SK-N-SH (cell line): ENCODE measurements at regions of chr4 and their contacts with region 1.

Region 1: DNA sequence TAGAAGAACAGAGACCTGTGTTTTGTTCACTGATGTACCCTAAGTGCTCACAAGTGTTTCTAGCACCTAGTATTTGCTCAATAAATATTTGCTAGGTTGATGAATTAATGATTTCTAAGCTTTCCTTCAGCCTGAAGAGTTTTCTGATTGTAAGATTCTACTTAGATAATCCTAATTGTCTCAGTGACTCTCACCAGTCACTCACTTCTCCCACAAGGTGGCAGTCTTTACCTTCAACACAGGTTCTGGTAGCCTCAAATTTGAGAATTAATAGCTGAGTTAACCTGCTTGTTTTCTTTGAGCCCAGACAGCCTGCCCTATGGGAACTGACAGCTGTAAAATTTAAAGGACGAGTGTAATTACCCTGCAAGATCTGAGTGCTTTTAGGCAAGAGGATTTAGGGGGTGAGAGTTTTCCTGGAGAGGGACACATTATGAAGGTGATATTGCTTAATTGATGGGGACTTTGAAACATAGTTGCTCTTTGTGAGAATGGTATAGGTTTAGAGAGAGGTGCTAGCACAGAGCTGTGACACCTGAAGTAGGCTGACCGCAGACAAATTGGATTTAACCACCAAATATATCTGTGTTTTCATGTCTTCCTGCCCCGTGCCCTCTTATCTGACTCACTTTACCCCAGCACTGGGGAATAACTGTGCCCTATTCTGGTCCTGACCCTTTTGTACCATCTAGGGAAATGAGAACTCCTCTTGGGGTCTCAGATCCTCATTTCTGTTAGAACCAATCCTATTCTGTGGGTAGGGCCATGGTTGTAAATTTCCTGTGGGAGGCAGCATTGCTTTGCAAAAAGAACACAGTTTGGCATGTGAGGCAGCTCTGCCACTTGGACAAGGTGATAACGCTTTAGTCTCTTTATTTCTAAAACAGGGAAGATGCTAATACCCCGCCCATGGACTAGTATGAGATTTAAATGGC is 27.7 kb downstream of the CD38 start:
- DNase-seq: peak; percentile 39
- H3K4me3 ChIP-seq: no peak overlapping the region; a peak in 1 of 4 replicates
- H3K27ac ChIP-seq: no peak overlapping the region
- H3K4me1 ChIP-seq: no peaks in the 10 kb centered on the region
- H3K27me3 ChIP-seq: no peaks in the 10 kb centered on the region; the same call in 1 of the 2 replicates
- CTCF ChIP-seq: peak; percentile 88
- EP300 ChIP-seq: no peak
- RAD21 ChIP-seq: peak; percentile 92

Region 2: DNA sequence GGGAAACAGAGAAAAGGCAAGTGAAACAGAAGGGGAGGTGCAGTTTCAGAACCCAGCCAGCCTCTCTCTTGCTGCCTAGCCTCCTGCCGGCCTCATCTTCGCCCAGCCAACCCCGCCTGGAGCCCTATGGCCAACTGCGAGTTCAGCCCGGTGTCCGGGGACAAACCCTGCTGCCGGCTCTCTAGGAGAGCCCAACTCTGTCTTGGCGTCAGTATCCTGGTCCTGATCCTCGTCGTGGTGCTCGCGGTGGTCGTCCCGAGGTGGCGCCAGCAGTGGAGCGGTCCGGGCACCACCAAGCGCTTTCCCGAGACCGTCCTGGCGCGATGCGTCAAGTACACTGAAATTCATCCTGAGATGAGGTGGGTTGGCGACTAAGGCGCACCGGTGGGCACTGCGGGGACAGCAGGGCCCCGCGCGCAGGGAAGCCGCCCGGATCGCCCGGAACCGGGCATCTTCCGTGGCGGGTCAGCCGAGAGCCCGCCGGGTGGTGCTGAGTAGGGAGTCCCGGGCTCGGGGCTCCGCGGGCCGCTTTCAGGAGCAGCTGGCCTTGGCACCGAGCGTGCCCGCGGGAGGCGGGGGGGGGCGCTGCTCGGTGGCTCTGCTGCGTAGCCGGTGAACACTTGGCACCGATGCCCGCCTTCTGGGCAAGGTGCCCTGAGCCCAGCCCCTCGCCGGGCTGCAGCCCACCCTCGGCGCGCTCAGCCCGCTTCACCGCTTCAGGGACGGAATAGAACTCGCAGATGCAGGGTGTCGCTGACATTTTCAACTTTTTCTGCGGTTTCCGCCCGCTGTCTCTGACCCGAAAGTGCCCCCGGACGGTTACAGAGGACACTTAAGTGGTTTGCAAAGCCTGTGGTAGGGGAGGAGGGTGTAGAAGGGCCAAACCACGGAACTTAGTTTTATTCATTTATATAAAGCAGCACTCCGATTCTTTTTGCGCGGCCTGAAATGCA is 27.3 kb before region 1 on chr4 and contains the start of gene CD38:
- CTCF ChIA-PET with region 1: interaction called, 26 read pairs
- POLR2A ChIA-PET with region 1: no interaction called
- DNase-seq: peak; percentile 78
- H3K4me3 ChIP-seq: peak within 1 kb of the TSS; percentile 59 to 66
- H3K27ac ChIP-seq: no peak within 1 kb of the TSS
- H3K4me1 ChIP-seq: peaks cover 0 to 10% of the 10 kb centered on the region in 2 experiments; a peak in 2 of 4 replicates
- H3K27me3 ChIP-seq: peaks cover 21% of the 10 kb centered on the region
- CTCF ChIP-seq: no peak
- EP300 ChIP-seq: no peak
- RAD21 ChIP-seq: no peak
- polyA plus RNA-seq, gene CD38: 0.02 TPM in 1 of 2 replicates, not detected in the other

Region 3: GRCh38 chr4:15836362-15836761 is 30.5 kb after region 1 on chr4:
- CTCF ChIA-PET with region 1: interaction called, 10 read pairs
- POLR2A ChIA-PET with region 1: no interaction called
- DNase-seq: no peak
- H3K4me3 ChIP-seq: no peak overlapping the region
- H3K27ac ChIP-seq: no peak overlapping the region
- H3K4me1 ChIP-seq: no peaks in the 10 kb centered on the region
- H3K27me3 ChIP-seq: no peaks in the 10 kb centered on the region
- CTCF ChIP-seq: no peak
- EP300 ChIP-seq: no peak
- RAD21 ChIP-seq: no peak

Region 4: GRCh38 chr4:15945516-15945915 is 139.7 kb after region 1 on chr4:
- CTCF ChIA-PET with region 1: interaction called, 14 read pairs
- POLR2A ChIA-PET with region 1: no interaction called
- DNase-seq: no peak
- H3K4me3 ChIP-seq: no peak overlapping the region
- H3K27ac ChIP-seq: no peak overlapping the region
- H3K4me1 ChIP-seq: no peaks in the 10 kb centered on the region
- H3K27me3 ChIP-seq: no peaks in the 10 kb centered on the region
- CTCF ChIP-seq: no peak
- EP300 ChIP-seq: no peak
- RAD21 ChIP-seq: no peak

Region 5: GRCh38 chr4:16001484-16001858 is 195.6 kb after region 1 on chr4:
- CTCF ChIA-PET with region 1: interaction called, 69 read pairs
- POLR2A ChIA-PET with region 1: no interaction called
- DNase-seq: peak; percentile 76
- H3K4me3 ChIP-seq: no peak overlapping the region; a peak in 1 of 4 replicates
- H3K27ac ChIP-seq: no peak overlapping the region
- H3K4me1 ChIP-seq: peaks cover 0 to 12% of the 10 kb centered on the region in 2 experiments; a peak in 1 of 4 replicates
- H3K27me3 ChIP-seq: 0 out of 2 replicates have a peak, but pooled peaks cover 6% of the 10 kb centered on the region
- CTCF ChIP-seq: peak; percentile 88
- EP300 ChIP-seq: no peak; a peak in 1 of 4 replicates
- RAD21 ChIP-seq: peak; percentile 94